ENCODE measurements at regions of chr1 and their contacts with region 1.

Region 1: DNA sequence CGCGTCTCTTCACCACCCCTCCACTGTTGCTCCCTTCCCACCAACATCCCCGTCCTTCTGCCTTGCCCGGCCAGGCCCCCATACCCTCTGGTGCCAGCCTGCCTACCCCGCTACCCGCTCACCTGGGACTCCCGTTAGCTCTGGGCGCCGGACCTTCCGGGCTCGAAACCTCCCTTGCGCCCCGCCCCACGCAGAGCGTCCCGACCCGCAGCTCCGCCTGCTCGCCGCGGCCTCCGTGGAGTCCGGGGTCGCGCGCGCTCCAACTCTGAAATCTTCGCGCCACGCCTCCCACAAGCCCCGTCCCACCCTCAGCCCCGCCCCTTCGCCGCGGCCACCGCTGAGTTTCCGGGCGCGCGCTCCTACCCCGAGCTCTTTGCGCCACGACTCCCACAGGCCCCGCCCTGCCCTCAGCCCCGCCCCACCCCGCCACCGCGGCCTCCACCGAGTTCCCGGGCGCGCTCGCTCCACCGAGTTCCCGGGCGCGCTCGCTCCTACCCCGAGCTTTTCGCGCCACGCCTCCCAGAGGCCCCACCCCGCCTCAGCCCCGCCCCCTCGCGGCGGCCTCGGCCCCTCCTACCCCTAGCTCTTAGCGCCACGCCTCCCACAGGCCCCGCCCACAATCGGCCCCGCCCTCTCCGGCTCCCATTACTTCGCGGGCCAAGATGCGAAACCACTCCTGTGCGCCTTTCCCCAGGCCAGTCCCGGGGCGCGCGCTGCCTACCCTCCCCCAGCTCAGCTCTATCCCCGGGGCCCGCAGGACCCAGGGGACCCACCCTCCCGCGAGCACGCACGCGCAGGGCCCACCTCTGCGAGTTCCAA is at the start of gene IFT25:
- DNase-seq: peak; percentile 100
- ATAC-seq: peak; percentile 82
- H3K4me3 Mint-ChIP-seq: peak within 1 kb of the TSS; percentile 97
- H3K27ac Mint-ChIP-seq: peak within 1 kb of the TSS; percentile 92
- H3K4me1 Mint-ChIP-seq: peaks cover 45% of the 10 kb centered on the region
- H3K27me3 Mint-ChIP-seq: no peaks in the 10 kb centered on the region
- total RNA-seq, gene IFT25: 76.7 to 81.6 TPM

Region 2: DNA sequence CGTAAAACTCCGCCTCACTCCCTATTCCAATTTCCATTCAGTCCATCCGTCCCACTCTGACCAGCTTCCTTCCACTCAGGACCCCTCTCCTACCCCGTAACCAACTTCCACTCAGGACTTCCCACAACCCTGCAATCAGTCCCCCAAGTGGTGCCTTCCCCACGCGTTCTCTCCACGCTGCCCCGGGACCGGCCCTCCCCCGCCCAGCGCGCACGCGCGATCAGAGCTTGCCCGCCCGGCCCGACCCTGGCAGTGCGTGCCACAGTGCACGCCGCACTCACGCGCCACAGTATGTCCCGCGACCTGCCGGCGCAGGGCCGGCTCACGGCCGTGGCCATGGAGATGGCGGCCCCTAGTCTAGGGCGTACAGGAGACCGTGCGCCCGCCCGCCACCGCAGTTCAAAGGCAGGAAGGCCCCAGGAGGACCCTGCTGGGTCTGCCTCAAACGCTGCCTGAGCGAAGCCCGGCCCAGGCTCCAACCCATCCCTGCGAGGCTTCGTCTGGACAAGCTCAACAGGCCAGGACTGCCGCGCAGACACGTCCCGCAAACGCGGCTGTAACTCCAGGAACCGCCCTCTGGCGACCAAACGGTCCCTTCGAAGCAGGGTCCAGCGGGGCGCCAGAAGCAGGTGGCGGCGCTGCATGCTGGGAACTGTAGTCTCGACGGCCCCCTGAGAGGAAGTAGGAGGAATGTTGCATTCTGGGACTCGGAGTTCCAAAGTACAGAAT is 107.6 kb before region 1 on chr1 and contains the start of gene NDC1:
- POLR2A ChIA-PET with region 1: interaction called, 23 read pairs
- DNase-seq: peak; percentile 92
- ATAC-seq: peak; percentile 93
- H3K4me3 Mint-ChIP-seq: peak within 1 kb of the TSS; percentile 99
- H3K27ac Mint-ChIP-seq: peak within 1 kb of the TSS; percentile 98
- H3K4me1 Mint-ChIP-seq: peaks cover 23% of the 10 kb centered on the region
- H3K27me3 Mint-ChIP-seq: peaks cover 3% of the 10 kb centered on the region
- total RNA-seq, gene NDC1: 19.0 to 19.5 TPM

Region 3: GRCh38 chr1:53889304-53890298 is 56.0 kb before region 1 on chr1 and contains the start of gene YIPF1:
- POLR2A ChIA-PET with region 1: interaction called, 28 read pairs
- DNase-seq: peak; percentile 86
- ATAC-seq: peak; percentile 98
- H3K4me3 Mint-ChIP-seq: peak within 1 kb of the TSS; percentile 95
- H3K27ac Mint-ChIP-seq: peak within 1 kb of the TSS; percentile 92
- H3K4me1 Mint-ChIP-seq: peaks cover 15% of the 10 kb centered on the region
- H3K27me3 Mint-ChIP-seq: no peaks in the 10 kb centered on the region
- total RNA-seq, gene YIPF1: 16.9 to 19.5 TPM

Region 4: DNA sequence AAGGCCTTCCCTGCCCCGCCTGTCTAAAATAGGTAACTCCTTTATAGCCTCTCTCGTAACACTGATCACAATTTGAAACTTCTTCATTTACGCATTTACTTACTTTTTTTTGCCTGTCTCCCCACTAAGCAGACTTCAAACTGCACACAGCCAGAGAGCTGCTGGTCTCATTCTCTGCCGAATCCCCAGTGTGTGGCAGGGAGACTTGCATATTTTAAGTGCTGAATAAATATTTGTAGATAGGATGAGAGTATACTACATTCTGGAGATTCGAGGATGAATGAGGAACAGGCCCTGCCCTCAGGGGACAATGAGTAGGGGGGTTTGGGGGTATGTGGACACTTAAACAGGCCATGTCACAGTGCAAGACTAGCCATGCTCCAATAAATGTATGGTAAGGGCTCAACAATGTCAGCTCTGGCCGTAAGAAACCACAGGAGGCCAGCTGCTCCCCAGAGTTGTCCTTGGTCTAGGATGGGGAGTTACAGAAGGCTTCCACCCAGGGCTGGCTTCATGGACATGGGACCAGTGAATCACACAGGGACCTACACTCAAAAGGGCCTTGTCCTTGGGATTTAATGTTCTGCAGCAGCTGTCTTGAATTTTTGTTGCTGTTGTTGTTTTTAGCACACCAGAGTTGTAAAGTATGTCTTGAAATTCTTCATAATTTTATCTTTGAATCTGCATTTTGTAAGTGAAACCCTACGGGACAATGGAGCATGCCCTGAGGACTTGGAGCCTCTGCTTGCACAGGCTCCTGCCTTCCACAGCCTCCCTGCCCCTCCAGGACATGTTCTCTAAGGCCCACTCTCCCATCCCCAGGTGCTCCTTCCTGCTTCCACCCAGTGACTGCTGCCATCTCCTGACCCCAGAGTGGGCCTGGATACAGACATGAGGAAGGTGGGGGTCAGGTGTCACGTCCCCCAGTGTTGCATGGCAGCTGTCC is 43.1 kb before region 1 on chr1:
- POLR2A ChIA-PET with region 1: interaction called, 10 read pairs
- DNase-seq: no peak
- ATAC-seq: no peak
- H3K4me3 Mint-ChIP-seq: no peak overlapping the region
- H3K27ac Mint-ChIP-seq: peak overlapping the region; percentile 38
- H3K4me1 Mint-ChIP-seq: peaks cover 10% of the 10 kb centered on the region
- H3K27me3 Mint-ChIP-seq: no peaks in the 10 kb centered on the region

Region 5: DNA sequence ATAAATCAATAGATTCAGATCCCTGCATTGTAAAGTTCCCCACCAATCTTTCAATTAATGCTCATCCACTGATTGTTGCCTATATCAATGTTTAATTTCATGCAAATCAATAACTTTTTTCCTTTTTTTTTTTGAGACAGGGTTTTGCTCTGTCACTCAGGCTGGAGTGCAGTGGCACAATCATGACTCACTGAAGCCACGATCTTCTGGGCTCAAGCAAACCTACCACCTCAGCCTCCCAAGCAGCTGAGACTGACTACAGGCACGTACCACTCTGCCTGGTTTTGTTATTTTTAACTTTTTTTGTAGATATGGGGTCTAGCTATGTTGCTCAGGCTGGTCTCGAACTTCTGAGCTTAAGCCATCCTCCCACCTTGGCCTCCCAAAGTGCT is 26.0 kb before region 1 on chr1:
- POLR2A ChIA-PET with region 1: interaction called, 10 read pairs
- DNase-seq: no peak
- ATAC-seq: peak; percentile 79
- H3K4me3 Mint-ChIP-seq: peak overlapping the region; percentile 44
- H3K27ac Mint-ChIP-seq: peak overlapping the region; percentile 79
- H3K4me1 Mint-ChIP-seq: peaks cover 41% of the 10 kb centered on the region
- H3K27me3 Mint-ChIP-seq: no peaks in the 10 kb centered on the region

Region 6: GRCh38 chr1:54052934-54053744 is 107.5 kb after region 1 on chr1 and contains the starts of genes TCEANC2 and TMEM59:
- POLR2A ChIA-PET with region 1: interaction called, 18 read pairs
- DNase-seq: peak; percentile 93
- ATAC-seq: peak; percentile 96
- H3K4me3 Mint-ChIP-seq: no peak within 1 kb of the TSS
- H3K27ac Mint-ChIP-seq: no peak within 1 kb of the TSS
- H3K4me1 Mint-ChIP-seq: peaks cover 26% of the 10 kb centered on the region
- H3K27me3 Mint-ChIP-seq: no peaks in the 10 kb centered on the region
- total RNA-seq, gene TCEANC2: 11.7 to 13.5 TPM
- total RNA-seq, gene TMEM59: 182 to 192 TPM

Measured in activated naive CD8-positive, alpha-beta T cell treated with anti-CD3 and anti-CD28 coated beads, Interleukin-2, amount 10 ng/mL, durations not matched to agents 7 days and 5 days (primary cell).